Cardiac septum (tissue), 1 donor: ENCODE measurements at regions of chr18 and their contacts with region 1.

Region 1: GRCh38 chr18:24600076-24600654 is 139.7 kb downstream of the HRH4 start:
- DNase-seq: no peak

Region 2: DNA sequence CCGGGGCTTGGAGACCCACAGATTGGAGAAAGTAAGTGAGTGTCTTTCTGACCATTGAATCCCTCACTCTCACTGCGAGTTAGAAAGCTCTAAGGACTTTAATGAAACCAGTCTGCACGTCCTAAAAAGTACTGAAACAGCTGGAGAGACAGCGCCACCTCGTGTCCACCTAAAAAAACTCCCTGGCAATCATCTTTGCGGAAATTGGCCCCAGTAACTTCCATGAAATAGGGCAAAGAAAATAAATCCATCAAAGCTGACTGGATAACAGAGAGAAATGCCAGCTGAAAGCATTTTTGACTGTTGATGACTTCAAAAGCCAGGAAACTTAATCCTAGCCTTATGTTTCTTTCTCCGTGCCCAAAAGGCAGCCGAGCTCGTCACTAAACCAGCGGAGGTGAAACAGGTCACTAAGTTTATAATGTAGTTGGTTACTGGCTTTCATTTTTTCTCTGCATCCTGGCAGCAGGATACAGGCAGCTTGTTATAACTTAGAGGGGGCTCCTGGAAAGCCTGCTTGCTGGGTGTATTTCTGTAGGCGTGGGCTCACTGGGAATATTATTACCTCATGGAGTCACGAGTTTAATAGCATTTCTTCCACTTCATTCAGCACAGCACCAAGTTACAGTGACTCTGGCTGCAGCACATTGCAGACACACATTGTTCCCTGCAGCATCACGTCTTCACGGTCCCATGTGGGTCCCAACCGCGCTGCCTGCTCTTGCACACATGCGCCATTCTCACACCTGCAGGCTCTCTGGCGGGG is 126.7 kb after region 1 on chr18:
- intact Hi-C with region 1: loop called (anchors 2 kb)
- DNase-seq: no peak